ENCODE measurements at regions of chr12 and their contacts with region 1.

Region 1: DNA sequence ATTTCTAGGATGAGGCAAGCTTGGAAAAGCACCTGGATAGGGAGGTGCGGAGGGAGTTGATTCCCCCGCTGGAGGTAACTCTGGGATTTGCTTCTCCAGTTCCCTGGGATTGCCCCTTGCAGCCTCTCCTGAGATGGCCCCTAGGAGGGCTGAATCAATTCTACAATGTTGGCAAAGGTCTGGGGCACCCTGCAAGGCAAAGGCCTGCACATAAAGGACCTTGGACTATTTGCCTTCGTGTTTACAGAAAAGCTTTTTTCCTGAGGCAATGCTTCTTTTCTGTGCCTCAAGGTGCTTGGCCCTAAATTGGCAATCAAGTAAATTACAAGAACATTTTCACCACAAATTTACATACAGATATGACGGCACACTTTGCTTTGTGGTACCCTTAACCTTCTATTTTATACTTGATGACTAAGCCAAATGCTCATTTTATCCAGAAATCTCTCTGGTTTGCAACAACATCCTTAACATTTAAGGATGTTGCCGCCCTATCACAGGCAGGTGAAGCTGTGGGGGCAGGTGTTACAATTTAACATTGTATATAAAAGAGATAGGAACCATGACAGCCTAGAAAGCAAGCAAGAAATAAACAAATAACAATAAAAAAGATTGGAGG is 40.3 kb downstream of the TIMELESS start:
- DNase-seq: no peak
- H3K4me3 ChIP-seq: no peak overlapping the region
- H3K27ac ChIP-seq: no peak overlapping the region
- H3K4me1 ChIP-seq: no peaks in the 10 kb centered on the region
- H3K27me3 ChIP-seq: no peaks in the 10 kb centered on the region
- CTCF ChIP-seq: no peak

Region 2: DNA sequence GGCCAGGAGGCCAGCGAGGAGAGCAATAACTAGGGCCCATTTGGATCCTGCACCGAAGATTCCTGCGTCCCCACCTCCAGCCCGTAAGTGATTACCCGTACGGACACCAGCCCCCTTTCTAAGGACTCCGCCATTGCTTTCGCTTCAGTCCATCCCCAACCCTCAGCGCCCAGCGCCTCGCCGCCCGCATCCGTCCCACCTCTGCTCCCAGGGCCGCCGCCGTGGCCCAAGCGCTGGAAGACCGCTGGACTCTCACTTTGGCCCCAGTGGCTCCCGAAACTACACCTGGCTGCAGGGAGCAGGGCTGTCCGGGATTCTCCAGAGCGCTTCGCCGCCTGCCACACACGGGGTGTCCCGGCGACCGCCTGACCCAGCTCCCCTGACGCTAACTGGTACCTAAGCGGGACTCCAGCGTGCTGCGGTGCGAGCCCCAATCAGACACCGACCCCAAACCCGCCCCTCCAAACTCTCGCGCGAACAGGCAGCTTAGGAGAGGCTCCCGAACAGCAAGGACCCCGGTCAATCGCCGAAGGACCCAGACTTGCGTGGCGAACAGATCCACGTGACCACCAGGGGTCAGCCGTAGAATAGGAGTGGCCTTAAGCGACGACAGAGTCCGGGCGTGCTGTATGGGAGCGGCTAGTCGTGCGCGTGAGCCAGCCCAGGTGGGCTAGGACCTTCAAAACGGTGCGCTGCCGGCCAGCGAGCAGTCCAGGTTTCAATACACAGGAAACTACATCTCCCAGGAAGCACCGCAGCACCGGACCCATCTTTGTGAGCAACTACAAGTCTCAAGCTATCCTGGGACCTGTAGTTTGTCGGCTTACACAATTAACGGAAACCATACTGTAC is 93.1 kb before region 1 on chr12 and contains the start of gene CNPY2:
- CTCF ChIA-PET with region 1: no interaction called
- dilution Hi-C with region 1: loop called (anchors 10 kb)
- in situ Hi-C with region 1: no loop called
- intact Hi-C with region 1: no loop called
- DNase-seq: peak; percentile 99
- H3K4me3 ChIP-seq: peak within 1 kb of the TSS; percentile 94 to 96 (median 95)
- H3K27ac ChIP-seq: peak within 1 kb of the TSS; percentile 89
- H3K4me1 ChIP-seq: peaks cover 17% of the 10 kb centered on the region
- H3K27me3 ChIP-seq: no peaks in the 10 kb centered on the region
- CTCF ChIP-seq: peak in 1 of 2 donors; percentile 18
- total RNA-seq, gene CNPY2: 49.3 to 114 TPM

Region 3: DNA sequence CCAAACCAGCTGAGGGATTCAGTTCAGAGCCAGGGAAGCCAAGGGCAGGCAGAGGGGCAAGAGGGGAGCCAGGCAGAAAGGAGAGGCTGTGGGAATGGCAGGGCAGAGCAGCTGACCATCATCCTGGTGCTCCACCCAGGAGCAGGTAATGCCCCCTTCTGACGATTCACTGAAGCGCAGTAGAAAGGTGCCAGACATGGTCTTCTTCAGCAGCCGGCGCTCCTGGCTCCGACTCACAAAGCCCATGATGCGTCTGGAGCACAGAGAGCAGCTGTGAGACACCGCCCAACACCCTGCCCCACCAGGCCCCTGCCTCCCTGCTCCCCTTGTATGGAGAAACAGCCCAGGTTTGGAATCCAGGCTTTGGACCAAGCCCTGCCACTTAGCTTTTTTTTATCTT is 62.2 kb before region 1 on chr12:
- CTCF ChIA-PET with region 1: no interaction called
- dilution Hi-C with region 1: loop called (anchors 10 kb)
- in situ Hi-C with region 1: no loop called
- intact Hi-C with region 1: no loop called
- DNase-seq: no peak
- H3K4me3 ChIP-seq: no peak overlapping the region
- H3K27ac ChIP-seq: no peak overlapping the region
- H3K4me1 ChIP-seq: no peaks in the 10 kb centered on the region
- H3K27me3 ChIP-seq: no peaks in the 10 kb centered on the region
- CTCF ChIP-seq: peak in 1 of 2 donors; percentile 14

Region 4: GRCh38 chr12:56359851-56360767 is 48.8 kb before region 1 on chr12 and contains the start of gene STAT2:
- CTCF ChIA-PET with region 1: no interaction called
- dilution Hi-C with region 1: loop called (anchors 5 kb)
- in situ Hi-C with region 1: no loop called
- intact Hi-C with region 1: no loop called
- DNase-seq: peak; percentile 100
- H3K4me3 ChIP-seq: peak within 1 kb of the TSS; percentile 71 to 85 (median 83)
- H3K27ac ChIP-seq: peak within 1 kb of the TSS; percentile 95
- H3K4me1 ChIP-seq: peaks cover 12% of the 10 kb centered on the region
- H3K27me3 ChIP-seq: no peaks in the 10 kb centered on the region
- CTCF ChIP-seq: no peak
- total RNA-seq, gene STAT2: 93.1 to 231 TPM

Region 5: DNA sequence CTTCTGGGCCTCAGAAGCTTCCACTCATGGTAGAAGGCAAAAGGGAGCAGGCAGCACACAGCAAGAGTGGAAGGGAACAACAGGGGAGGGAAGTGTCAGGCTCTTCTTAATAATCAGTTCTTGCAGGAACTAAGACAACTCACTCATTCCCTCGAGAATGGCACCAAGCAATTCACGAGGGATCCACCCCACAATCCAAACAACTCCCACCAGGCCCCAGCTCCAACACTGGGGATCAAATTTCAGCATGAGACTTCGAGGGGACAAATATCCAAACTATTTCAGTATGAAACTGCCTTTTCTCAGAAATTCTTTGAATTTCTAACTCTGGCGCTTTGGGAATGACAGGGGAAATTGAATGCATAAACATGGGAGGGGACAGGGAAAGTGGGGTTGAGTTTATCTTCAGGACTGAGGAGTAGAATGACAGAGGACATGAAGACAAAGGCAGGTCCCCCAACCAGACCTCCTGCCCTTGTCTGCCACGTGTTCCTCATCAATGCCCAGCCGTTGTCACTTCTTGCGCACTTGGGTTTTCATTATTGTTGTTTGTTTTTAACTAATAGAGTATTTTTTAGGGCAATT is 21.7 kb before region 1 on chr12:
- CTCF ChIA-PET with region 1: no interaction called
- dilution Hi-C with region 1: no loop called
- in situ Hi-C with region 1: no loop called
- intact Hi-C with region 1: no loop called
- DNase-seq: no peak
- H3K4me3 ChIP-seq: no peak overlapping the region
- H3K27ac ChIP-seq: no peak overlapping the region
- H3K4me1 ChIP-seq: no peaks in the 10 kb centered on the region
- H3K27me3 ChIP-seq: no peaks in the 10 kb centered on the region
- CTCF ChIP-seq: no peak

Region 6: GRCh38 chr12:56461235-56462159 is 52.6 kb after region 1 on chr12:
- CTCF ChIA-PET with region 1: no interaction called
- dilution Hi-C with region 1: loop called (anchors 5 kb)
- in situ Hi-C with region 1: no loop called
- intact Hi-C with region 1: no loop called
- DNase-seq: peak; percentile 24
- H3K4me3 ChIP-seq: no peak overlapping the region
- H3K27ac ChIP-seq: no peak overlapping the region
- H3K4me1 ChIP-seq: no peaks in the 10 kb centered on the region
- H3K27me3 ChIP-seq: no peaks in the 10 kb centered on the region
- CTCF ChIP-seq: no peak

Region 7: GRCh38 chr12:56614627-56615026 is 205.7 kb after region 1 on chr12:
- CTCF ChIA-PET with region 1: no interaction called
- dilution Hi-C with region 1: loop called (anchors 5 kb)
- in situ Hi-C with region 1: no loop called
- intact Hi-C with region 1: no loop called
- DNase-seq: no peak
- H3K4me3 ChIP-seq: no peak overlapping the region
- H3K27ac ChIP-seq: no peak overlapping the region
- H3K4me1 ChIP-seq: no peaks in the 10 kb centered on the region
- H3K27me3 ChIP-seq: no peaks in the 10 kb centered on the region
- CTCF ChIP-seq: no peak

Measured in mammary epithelial cell (primary cell).